B cell (primary cell): ENCODE measurements at regions of chrX and their contacts with region 1.

Region 1: GRCh38 chrX:65985922-65986588 is 53.8 kb downstream of the VSIG4 start:
- DNase-seq: peak; percentile 64
- ATAC-seq: peak; percentile 87
- H3K4me3 ChIP-seq: no peak overlapping the region
- H3K4me3 Mint-ChIP-seq: no peak overlapping the region
- H3K27ac ChIP-seq: peak overlapping the region in 1 of 2 donors; percentile 17
- H3K27ac Mint-ChIP-seq: peak overlapping the region; percentile 89
- H3K4me1 ChIP-seq: peaks cover 27 to 29% of the 10 kb centered on the region in 2 donors
- H3K4me1 Mint-ChIP-seq: peaks cover 40% of the 10 kb centered on the region
- H3K27me3 ChIP-seq: no peaks in the 10 kb centered on the region
- H3K27me3 Mint-ChIP-seq: no peaks in the 10 kb centered on the region
- CTCF ChIP-seq: peak; percentile 44

Region 2: GRCh38 chrX:65581661-65582339 is 404.3 kb before region 1 on chrX:
- CTCF ChIA-PET with region 1: interaction called, 12 read pairs
- POLR2A ChIA-PET with region 1: no interaction called
- intact Hi-C with region 1: loop called (anchors 1 kb)
- DNase-seq: peak; percentile 71
- ATAC-seq: peak; percentile 62
- H3K4me3 ChIP-seq: no peak overlapping the region
- H3K4me3 Mint-ChIP-seq: no peak overlapping the region
- H3K27ac ChIP-seq: no peak overlapping the region
- H3K27ac Mint-ChIP-seq: no peak overlapping the region
- H3K4me1 ChIP-seq: peaks cover 5 to 6% of the 10 kb centered on the region in 2 donors
- H3K4me1 Mint-ChIP-seq: peaks cover 4% of the 10 kb centered on the region
- H3K27me3 ChIP-seq: no peaks in the 10 kb centered on the region
- H3K27me3 Mint-ChIP-seq: no peaks in the 10 kb centered on the region
- CTCF ChIP-seq: peak; percentile 73

Region 3: GRCh38 chrX:65723706-65724105 is 262.3 kb before region 1 on chrX:
- CTCF ChIA-PET with region 1: interaction called, 3 read pairs
- POLR2A ChIA-PET with region 1: no interaction called
- intact Hi-C with region 1: loop called (anchors 10 kb)
- DNase-seq: peak; percentile 33
- ATAC-seq: peak; percentile 50
- H3K4me3 ChIP-seq: no peak overlapping the region
- H3K4me3 Mint-ChIP-seq: peak overlapping the region; percentile 53
- H3K27ac ChIP-seq: peak overlapping the region in 1 of 2 donors; percentile 72
- H3K27ac Mint-ChIP-seq: peak overlapping the region; percentile 86
- H3K4me1 ChIP-seq: peaks cover 51 to 69% of the 10 kb centered on the region in 2 donors
- H3K4me1 Mint-ChIP-seq: peaks cover 82% of the 10 kb centered on the region
- H3K27me3 ChIP-seq: no peaks in the 10 kb centered on the region
- H3K27me3 Mint-ChIP-seq: no peaks in the 10 kb centered on the region
- CTCF ChIP-seq: no peak

Region 4: DNA sequence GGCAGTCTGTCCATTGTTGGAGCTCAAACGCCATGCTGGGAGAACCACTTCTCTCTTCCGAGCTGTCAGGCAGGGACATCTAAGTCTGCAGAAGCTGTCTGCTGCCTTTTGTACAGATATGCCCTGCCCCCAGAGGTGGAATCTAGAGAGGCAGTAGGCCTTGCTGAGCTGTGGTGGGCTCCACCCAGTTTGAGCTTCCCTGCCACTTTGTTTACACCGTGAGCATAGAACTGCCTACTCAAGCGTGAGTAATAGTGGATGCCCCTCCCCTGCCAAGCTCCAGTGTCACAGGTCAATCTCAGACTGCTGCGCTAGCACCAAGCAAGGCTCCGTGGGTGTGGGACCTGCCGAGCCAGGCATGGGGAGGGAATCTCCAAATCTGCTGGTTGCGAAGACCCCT is 91.9 kb before region 1 on chrX:
- CTCF ChIA-PET with region 1: interaction called, 4 read pairs
- POLR2A ChIA-PET with region 1: no interaction called
- intact Hi-C with region 1: loop called (anchors 10 kb)
- DNase-seq: peak; percentile 56
- ATAC-seq: peak; percentile 86
- H3K4me3 ChIP-seq: peak overlapping the region in 2 of 5 experiments; percentile 17 to 19
- H3K4me3 Mint-ChIP-seq: peak overlapping the region; percentile 70
- H3K27ac ChIP-seq: peak overlapping the region in 1 of 2 donors; percentile 40
- H3K27ac Mint-ChIP-seq: peak overlapping the region; percentile 77
- H3K4me1 ChIP-seq: peaks cover 15 to 24% of the 10 kb centered on the region in 2 donors
- H3K4me1 Mint-ChIP-seq: peaks cover 36% of the 10 kb centered on the region
- H3K27me3 ChIP-seq: no peaks in the 10 kb centered on the region
- H3K27me3 Mint-ChIP-seq: no peaks in the 10 kb centered on the region
- CTCF ChIP-seq: no peak

Region 5: DNA sequence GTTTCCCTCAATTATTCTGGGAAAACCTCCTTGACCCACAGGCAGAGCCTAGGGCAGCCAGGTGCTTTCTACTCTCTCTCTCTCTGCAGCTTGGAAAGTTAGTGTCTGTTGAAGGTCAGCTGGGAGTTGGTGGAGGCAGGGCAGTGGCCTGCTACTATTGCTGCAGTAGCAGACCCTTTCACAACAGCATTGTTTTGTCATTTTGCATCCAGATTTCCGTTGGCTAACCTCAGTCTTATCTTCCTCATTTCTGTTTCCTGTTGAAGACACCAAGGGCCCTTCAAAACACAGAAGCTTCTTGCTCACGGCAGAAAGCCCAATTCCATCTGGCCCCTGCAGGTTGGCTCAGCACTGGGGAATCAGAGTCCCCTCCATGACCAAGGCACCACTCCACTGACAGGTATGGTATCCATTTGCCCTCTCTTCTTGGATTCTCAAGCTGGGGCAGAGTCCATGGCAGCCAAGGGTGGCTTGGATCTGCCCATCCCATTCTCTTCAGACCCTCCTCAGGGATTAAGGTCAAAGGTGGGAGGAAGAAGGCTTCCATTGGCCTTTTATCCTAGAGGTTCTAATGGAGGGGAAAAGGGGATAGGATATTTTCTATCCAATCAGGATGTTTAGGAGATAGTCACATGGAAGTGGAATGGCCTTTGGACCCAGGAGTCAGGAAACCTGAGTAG is 29.2 kb after region 1 on chrX:
- CTCF ChIA-PET with region 1: interaction called, 16 read pairs
- POLR2A ChIA-PET with region 1: no interaction called
- intact Hi-C with region 1: no loop called
- DNase-seq: peak; percentile 74
- ATAC-seq: peak; percentile 69
- H3K4me3 ChIP-seq: peak overlapping the region; percentile 64 to 89 (median 75)
- H3K4me3 Mint-ChIP-seq: peak overlapping the region; percentile 75
- H3K27ac ChIP-seq: peak overlapping the region; percentile 72 to 80
- H3K27ac Mint-ChIP-seq: peak overlapping the region; percentile 90
- H3K4me1 ChIP-seq: peaks cover 83 to 99% of the 10 kb centered on the region in 2 donors
- H3K4me1 Mint-ChIP-seq: peaks cover 80% of the 10 kb centered on the region
- H3K27me3 ChIP-seq: no peaks in the 10 kb centered on the region
- H3K27me3 Mint-ChIP-seq: no peaks in the 10 kb centered on the region
- CTCF ChIP-seq: no peak

Region 6: GRCh38 chrX:66110112-66110511 is 124.1 kb after region 1 on chrX:
- CTCF ChIA-PET with region 1: interaction called, 19 read pairs
- POLR2A ChIA-PET with region 1: no interaction called
- intact Hi-C with region 1: loop called (anchors 1 kb)
- DNase-seq: peak; percentile 42
- ATAC-seq: peak; percentile 51
- H3K4me3 ChIP-seq: no peak overlapping the region
- H3K4me3 Mint-ChIP-seq: no peak overlapping the region
- H3K27ac ChIP-seq: no peak overlapping the region
- H3K27ac Mint-ChIP-seq: no peak overlapping the region
- H3K4me1 ChIP-seq: peaks cover 0 to 8% of the 10 kb centered on the region in 2 donors
- H3K4me1 Mint-ChIP-seq: peaks cover 9% of the 10 kb centered on the region
- H3K27me3 ChIP-seq: peaks cover 0 to 2% (median 0%) of the 10 kb centered on the region in 4 experiments
- H3K27me3 Mint-ChIP-seq: no peaks in the 10 kb centered on the region
- CTCF ChIP-seq: peak; percentile 71